Common myeloid progenitor, CD34-positive (primary cell): ENCODE measurements at regions of chr18 and their contacts with region 1.

Region 1: GRCh38 chr18:46166261-46166970 is 62.2 kb downstream of the HAUS1 start:
- DNase-seq: no peak
- H3K4me3 ChIP-seq: no peak overlapping the region
- H3K27ac ChIP-seq: no peak overlapping the region
- H3K4me1 ChIP-seq: peaks cover 0 to 13% (median 8%) of the 10 kb centered on the region in 4 experiments
- H3K27me3 ChIP-seq: no peaks in the 10 kb centered on the region

Region 2: GRCh38 chr18:46148810-46149209 is 17.6 kb before region 1 on chr18:
- CTCF ChIA-PET with region 1: interaction called, 30 read pairs
- POLR2A ChIA-PET with region 1: no interaction called
- DNase-seq: peak; percentile 46 to 56 (median 48)
- H3K4me3 ChIP-seq: no peak overlapping the region
- H3K27ac ChIP-seq: no peak overlapping the region
- H3K4me1 ChIP-seq: no peaks in the 10 kb centered on the region
- H3K27me3 ChIP-seq: no peaks in the 10 kb centered on the region

Region 3: GRCh38 chr18:46315187-46315586 is 148.8 kb after region 1 on chr18:
- CTCF ChIA-PET with region 1: no interaction called
- POLR2A ChIA-PET with region 1: no interaction called
- DNase-seq: no peak
- H3K4me3 ChIP-seq: no peak overlapping the region
- H3K27ac ChIP-seq: no peak overlapping the region
- H3K4me1 ChIP-seq: no peaks in the 10 kb centered on the region
- H3K27me3 ChIP-seq: peaks cover 0 to 5% (median 0%) of the 10 kb centered on the region in 5 experiments